ENCODE measurements at regions of chr9 and their contacts with region 1.

Region 1: DNA sequence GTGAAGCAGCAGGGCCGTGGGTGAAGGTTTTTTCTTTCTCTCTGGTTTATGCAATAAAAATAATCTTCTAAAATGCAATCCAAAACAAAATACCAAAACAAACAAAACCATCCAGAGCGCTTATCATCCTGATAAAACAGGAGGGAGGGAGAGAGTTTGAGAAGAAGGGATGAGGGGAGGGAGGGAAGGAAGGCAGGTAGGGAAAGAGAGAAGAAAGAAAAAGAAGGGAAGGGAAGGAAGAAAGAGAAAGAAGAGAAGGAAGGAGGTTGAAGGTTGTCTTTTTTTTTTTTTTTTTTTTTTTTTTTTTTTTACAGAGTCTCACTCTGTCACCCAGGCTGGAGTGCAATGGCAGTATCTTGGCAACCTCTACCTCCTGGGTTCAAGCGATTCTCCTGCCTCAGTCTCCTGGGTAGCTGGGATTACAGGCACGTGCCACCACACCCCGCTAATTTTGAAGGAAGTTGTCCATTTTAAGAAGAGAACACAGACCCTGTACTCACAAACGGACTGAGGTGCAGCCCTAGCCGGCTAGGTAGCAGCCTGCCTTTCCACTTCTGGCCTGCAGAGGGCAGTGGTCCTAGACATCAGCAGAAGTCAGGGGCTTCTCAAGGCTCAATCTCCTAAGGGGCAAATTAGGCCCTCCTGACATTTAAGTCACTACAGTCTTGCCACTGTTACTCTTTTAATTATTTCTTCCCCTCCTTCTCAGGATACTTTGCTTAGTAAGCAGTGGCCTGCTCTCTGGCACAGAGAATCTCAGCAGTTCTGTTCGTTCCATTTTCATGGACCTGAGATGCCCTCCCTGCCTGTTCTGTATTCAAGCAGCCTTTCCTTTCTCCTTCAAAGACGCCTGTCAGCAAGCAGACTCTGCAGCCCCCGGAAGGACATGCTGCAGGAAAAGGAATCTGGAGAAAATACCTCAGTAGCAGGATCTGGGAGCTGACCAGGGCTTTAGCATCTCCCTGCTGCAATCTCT is 76.4 kb downstream of the EPB41L4B start:
- DNase-seq: peak; percentile 50
- H3K4me3 Mint-ChIP-seq: no peak overlapping the region
- H3K27ac Mint-ChIP-seq: no peak overlapping the region
- H3K4me1 Mint-ChIP-seq: no peaks in the 10 kb centered on the region
- H3K27me3 Mint-ChIP-seq: peaks cover 20% of the 10 kb centered on the region

Region 2: DNA sequence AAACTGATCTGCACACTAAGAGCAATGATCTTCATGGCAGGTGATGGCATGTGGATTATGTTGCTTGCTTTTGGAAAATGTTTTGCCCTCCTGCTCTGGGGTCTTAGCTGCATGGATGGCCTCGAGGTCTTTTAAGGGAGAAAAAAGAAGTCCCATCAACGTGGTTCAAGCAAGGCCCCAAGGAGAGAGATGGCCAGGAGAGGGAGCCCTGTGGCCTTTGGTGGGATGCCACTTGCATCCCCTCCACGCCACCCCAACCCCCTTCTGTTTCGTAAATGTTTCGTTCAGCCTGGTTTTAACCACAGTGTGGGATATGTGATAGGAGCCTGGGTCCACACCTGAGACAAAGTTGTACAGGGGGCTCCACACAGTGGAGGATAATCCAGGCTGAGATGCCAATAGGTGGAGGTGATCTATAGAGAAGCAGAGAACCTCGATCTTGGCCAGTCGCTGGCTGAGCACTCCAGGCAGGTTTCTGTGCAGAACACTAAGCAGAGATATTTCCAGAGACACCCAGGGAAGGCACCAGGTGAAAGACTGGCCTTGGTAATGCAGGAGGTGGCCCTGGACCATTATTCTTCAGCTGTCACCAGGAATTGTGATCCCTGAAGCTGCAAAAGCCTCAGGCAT is 51.6 kb before region 1 on chr9:
- intact Hi-C with region 1: no loop called
- DNase-seq: no peak
- H3K4me3 Mint-ChIP-seq: no peak overlapping the region
- H3K27ac Mint-ChIP-seq: no peak overlapping the region
- H3K4me1 Mint-ChIP-seq: no peaks in the 10 kb centered on the region
- H3K27me3 Mint-ChIP-seq: peaks cover 2% of the 10 kb centered on the region

Region 3: GRCh38 chr9:109401168-109401989 is 156.9 kb after region 1 on chr9:
- intact Hi-C with region 1: loop called (anchors 1 kb)
- DNase-seq: peak; percentile 28
- H3K4me3 Mint-ChIP-seq: no peak overlapping the region
- H3K27ac Mint-ChIP-seq: peak overlapping the region; percentile 25
- H3K4me1 Mint-ChIP-seq: peaks cover 19% of the 10 kb centered on the region
- H3K27me3 Mint-ChIP-seq: peaks cover 3% of the 10 kb centered on the region

Region 4: DNA sequence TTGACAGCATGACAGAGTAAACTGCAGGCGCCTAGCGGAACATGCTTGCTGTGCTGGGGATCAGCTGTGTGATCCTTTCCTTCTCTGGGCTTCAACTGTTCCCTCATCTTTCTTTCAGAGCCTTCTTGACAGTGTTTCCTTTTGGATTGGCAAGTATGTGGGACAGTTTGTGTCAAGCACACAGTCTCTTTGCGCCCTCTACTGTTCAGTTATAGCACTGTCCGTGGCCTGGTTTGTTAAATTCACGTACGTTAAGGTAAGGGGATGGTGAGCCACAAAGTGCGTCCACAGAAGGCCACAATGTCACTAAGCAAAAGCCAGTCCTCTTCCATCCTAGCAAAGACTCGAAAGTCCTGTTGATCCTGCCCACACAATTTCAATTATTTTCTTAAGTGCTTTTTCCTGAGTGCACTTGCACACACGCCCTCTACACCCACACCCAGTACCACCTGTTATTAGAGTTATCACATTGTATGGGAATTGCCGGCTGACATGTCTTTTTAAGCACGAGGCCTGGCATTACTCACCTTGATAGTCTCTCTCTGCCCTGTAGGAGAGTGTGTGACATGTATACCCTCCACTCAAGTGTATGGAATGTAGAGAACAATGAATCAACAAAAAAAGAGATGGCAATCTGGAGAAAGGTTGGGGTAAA is 276.2 kb after region 1 on chr9:
- intact Hi-C with region 1: loop called (anchors 5 kb)
- DNase-seq: peak; percentile 24
- H3K4me3 Mint-ChIP-seq: no peak overlapping the region
- H3K27ac Mint-ChIP-seq: no peak overlapping the region
- H3K4me1 Mint-ChIP-seq: no peaks in the 10 kb centered on the region
- H3K27me3 Mint-ChIP-seq: peaks cover 23% of the 10 kb centered on the region

Measured in activated T-helper 2 cell treated with anti-CD3 and anti-CD28 coated beads, Interferon-gamma antibody, Interleukin-2, Interleukin-4, amounts not matched to agents 10 μg/mL and 5 μg/mL and 100 μg/mL, durations not matched to agents 14 hours and 24 hours and 36 hours (primary cell).